Vagina (tissue), 2 donors: ENCODE measurements at regions of chr2 and their contacts with region 1.

Region 1: DNA sequence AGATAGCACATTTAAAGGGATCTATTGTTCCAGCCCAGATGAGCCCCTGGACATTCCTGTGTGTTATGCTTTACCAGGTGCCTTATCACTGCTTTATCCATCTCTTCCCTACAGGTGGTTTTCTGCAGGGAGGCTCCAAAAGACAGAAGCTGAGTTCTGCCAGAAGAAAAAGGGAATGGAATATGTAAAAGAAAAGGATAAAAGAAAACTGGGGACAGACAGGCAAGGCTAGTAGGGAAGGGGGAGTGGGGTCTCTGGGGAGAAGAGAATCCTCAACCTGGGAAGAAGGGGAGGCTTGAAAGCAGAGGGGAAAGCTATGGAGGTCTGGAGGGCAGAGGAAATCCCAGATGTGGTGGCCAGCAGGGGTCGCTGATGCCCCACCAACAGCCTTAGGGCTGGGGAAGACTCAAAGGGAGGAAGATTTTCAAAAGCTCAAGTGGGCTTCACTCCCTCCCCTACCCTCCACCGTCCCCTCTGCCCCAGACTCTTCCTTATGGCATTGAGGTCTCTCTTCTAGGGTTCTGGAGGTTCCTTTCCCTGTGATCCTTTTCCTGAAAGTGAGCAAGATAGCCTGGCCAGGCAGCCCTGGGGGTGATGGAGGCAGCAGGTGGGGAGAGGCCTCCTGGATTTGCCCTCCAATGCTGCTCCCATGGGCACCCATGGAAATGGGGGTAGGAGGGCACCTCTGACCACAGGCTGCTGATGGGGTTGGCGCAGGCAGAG is 178.1 kb upstream of the PKDCC start:
- DNase-seq: no peak
- H3K4me3 ChIP-seq: no peak overlapping the region
- H3K27ac ChIP-seq: no peak overlapping the region
- H3K4me1 ChIP-seq: peaks cover 14% of the 10 kb centered on the region
- H3K27me3 ChIP-seq: no peaks in the 10 kb centered on the region
- CTCF ChIP-seq: peak; percentile 82 to 87 (median 84)
- POLR2A ChIP-seq: no peak

Region 2: GRCh38 chr2:41741951-41742595 is 127.6 kb before region 1 on chr2:
- intact Hi-C with region 1: no loop called
- DNase-seq: no peak
- H3K4me3 ChIP-seq: no peak overlapping the region
- H3K27ac ChIP-seq: no peak overlapping the region
- H3K4me1 ChIP-seq: no peaks in the 10 kb centered on the region
- H3K27me3 ChIP-seq: no peaks in the 10 kb centered on the region
- CTCF ChIP-seq: no peak
- POLR2A ChIP-seq: no peak

Region 3: DNA sequence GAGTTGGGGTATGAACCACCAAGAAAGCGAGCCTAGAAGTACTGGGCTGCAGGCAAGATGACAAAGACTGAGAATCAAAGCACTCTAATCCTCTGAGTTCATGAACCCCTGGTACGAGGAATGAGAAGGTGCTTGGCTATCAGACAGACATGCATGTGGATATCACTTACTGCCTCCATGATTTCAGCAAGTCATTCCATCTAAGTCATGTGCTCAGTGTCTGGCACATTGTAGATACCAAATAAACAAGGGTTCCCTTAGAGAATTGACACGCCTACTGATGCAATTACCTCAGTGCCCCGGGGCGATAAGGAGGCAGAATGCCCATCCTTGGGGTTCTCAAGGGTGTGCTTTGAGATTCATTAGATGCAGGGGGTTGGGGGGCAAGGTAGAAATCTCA is 52.5 kb after region 1 on chr2:
- intact Hi-C with region 1: loop called (anchors 5 kb)
- DNase-seq: no peak
- H3K4me3 ChIP-seq: no peak overlapping the region
- H3K27ac ChIP-seq: no peak overlapping the region
- H3K4me1 ChIP-seq: peaks cover 19% of the 10 kb centered on the region
- H3K27me3 ChIP-seq: no peaks in the 10 kb centered on the region
- CTCF ChIP-seq: no peak
- POLR2A ChIP-seq: no peak

Region 4: GRCh38 chr2:42086500-42086953 is 216.8 kb after region 1 on chr2:
- intact Hi-C with region 1: loop called (anchors 2 kb)
- DNase-seq: no peak
- H3K4me3 ChIP-seq: no peak overlapping the region
- H3K27ac ChIP-seq: no peak overlapping the region
- H3K4me1 ChIP-seq: peaks cover 16% of the 10 kb centered on the region
- H3K27me3 ChIP-seq: no peaks in the 10 kb centered on the region
- CTCF ChIP-seq: peak; percentile 45 to 90 (median 58)
- POLR2A ChIP-seq: no peak